ENCODE measurements at regions of chr2 and their contacts with region 1.

Region 1: DNA sequence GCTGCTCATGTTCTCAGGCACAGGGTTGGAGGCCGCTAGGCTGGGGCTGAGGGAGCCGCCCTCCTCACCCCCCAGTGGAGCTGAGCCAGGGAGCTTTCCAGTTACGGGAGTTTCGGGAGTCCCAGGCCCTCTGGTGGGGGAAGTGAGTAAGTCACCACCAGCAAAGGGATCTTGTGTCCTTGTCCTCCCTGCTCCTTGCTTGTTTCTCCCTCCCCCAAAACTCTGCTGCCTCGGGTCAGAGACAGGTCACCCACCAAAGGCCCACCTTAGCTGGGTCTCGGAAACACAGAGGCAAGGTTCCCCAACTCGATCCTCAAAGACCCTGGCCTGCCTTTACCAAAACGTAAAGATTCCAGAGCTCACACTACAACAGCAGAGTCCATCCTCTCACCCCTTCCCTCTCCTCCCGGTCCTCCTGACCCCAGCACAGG is 60.5 kb upstream of the POMC start:
- DNase-seq: peak; percentile 85
- H3K4me3 ChIP-seq: no peak overlapping the region
- H3K4me3 Mint-ChIP-seq: no peak overlapping the region
- H3K27ac Mint-ChIP-seq: no peak overlapping the region
- H3K4me1 ChIP-seq: no peaks in the 10 kb centered on the region
- H3K4me1 Mint-ChIP-seq: peaks cover 7% of the 10 kb centered on the region
- H3K27me3 ChIP-seq: no peaks in the 10 kb centered on the region
- H3K27me3 Mint-ChIP-seq: no peaks in the 10 kb centered on the region
- CTCF ChIP-seq: peak; percentile 64 to 87

Region 2: DNA sequence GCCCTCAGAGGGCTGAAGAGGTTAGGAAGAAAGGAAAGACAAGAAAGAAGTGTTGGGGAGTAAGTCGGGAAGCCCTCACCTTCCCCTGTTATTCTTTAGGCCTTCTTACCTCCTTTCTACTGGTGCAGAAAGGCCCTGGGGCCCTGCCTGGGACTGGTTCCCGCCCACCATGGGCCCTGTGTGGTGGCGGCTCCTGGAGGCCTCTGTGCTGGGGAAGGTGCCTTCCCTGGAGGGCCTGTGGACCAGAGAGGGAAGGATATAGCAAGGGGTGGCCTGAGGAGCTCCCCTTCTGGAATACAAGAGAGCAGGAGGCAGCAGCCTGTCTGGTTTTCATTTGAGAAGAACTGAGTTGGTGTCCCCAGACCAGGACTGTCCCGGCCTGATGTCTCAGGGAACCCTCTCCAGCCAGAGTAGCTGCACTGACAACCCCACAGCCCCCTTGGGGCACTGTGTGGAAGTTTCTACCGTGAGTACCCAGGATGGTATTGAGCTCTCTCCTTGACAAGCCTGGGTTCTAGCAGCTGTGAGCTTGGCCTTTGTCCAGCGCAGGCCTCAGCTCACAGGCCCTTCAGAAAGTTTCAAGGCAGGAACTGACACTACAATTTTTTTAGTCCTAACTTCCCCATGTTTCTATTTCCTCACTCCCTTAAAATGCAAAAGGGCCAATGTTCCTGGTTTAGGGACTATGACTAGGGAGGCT is 139.9 kb before region 1 on chr2:
- CTCF ChIA-PET with region 1: no interaction called
- POLR2A ChIA-PET with region 1: no interaction called
- intact Hi-C with region 1: no loop called
- DNase-seq: no peak
- H3K4me3 ChIP-seq: no peak overlapping the region
- H3K4me3 Mint-ChIP-seq: no peak overlapping the region
- H3K27ac Mint-ChIP-seq: no peak overlapping the region
- H3K4me1 ChIP-seq: peaks cover 14% of the 10 kb centered on the region
- H3K4me1 Mint-ChIP-seq: peaks cover 8% of the 10 kb centered on the region
- H3K27me3 ChIP-seq: no peaks in the 10 kb centered on the region
- H3K27me3 Mint-ChIP-seq: no peaks in the 10 kb centered on the region
- CTCF ChIP-seq: no peak

Region 3: DNA sequence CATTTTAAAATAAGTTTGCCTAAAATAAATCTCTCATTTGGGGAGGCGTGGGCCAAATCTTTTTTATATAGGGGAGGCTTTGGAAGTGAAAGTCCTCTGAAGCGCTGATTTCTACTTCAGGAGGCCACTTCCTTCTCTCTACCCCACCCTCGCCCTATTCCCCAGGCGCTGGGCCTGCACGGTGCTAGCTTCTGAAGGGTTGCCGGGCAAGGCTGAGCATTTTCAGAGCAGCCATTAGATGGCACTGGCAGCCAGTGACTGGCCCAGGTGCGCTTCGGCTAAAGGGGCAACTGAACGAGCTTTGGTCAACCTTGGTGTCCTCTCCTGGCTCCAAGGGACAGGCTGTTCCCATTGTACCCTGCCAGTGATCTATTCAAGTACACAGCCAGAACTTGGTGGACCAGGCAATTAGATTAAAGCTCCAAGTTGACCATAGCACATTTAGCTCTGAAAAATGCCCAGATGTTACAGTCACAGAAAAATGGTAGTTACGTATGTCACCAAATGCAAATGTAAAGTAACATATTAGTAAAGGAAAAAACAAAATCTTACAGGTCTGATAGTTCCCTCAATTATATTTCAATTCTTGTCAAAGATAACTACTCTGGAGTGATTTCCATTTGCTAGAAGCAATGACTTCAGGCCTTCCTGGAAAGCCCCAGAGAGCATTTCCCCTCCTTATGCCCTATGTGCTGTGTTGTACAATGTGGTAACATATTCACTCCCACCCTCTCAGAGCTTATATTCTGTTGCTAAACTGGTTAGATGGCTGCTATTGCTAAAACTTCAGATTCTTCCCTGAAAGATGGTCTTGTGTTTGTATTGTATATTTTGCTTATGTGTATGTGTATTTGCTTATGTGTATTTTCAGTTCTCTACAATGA is 62.6 kb before region 1 on chr2:
- CTCF ChIA-PET with region 1: interaction called, 23 read pairs
- POLR2A ChIA-PET with region 1: no interaction called
- intact Hi-C with region 1: no loop called
- DNase-seq: peak; percentile 50 to 63
- H3K4me3 ChIP-seq: no peak overlapping the region
- H3K4me3 Mint-ChIP-seq: no peak overlapping the region
- H3K27ac Mint-ChIP-seq: no peak overlapping the region
- H3K4me1 ChIP-seq: peaks cover 6% of the 10 kb centered on the region; the same call in 1 of the 2 replicates
- H3K4me1 Mint-ChIP-seq: no peaks in the 10 kb centered on the region
- H3K27me3 ChIP-seq: no peaks in the 10 kb centered on the region
- H3K27me3 Mint-ChIP-seq: peaks cover 4% of the 10 kb centered on the region
- CTCF ChIP-seq: peak; percentile 47 to 52

Region 4: DNA sequence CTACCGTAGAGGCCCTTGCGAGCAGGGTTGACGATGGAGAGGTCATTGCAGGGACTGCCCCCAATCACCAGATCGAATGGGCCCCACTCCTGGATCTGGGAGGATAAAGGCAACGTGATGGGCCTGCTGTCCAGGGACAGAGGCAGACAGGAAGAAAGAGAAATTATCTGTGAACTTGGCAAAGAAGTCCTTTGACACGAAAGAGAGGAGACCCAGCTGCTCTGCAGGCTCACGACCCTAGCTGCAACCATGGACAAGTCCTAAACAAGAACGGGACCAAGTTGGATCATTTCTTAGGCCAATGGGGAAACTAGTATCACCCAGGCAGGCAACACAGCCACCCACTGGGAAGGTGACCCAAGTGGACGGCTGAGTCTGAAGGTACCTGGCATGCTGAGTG is 11.8 kb after region 1 on chr2:
- CTCF ChIA-PET with region 1: no interaction called
- POLR2A ChIA-PET with region 1: no interaction called
- intact Hi-C with region 1: no loop called
- DNase-seq: no peak
- H3K4me3 ChIP-seq: no peak overlapping the region
- H3K4me3 Mint-ChIP-seq: no peak overlapping the region
- H3K27ac Mint-ChIP-seq: no peak overlapping the region
- H3K4me1 ChIP-seq: no peaks in the 10 kb centered on the region
- H3K4me1 Mint-ChIP-seq: no peaks in the 10 kb centered on the region
- H3K27me3 ChIP-seq: no peaks in the 10 kb centered on the region
- H3K27me3 Mint-ChIP-seq: no peaks in the 10 kb centered on the region
- CTCF ChIP-seq: no peak

Region 5: DNA sequence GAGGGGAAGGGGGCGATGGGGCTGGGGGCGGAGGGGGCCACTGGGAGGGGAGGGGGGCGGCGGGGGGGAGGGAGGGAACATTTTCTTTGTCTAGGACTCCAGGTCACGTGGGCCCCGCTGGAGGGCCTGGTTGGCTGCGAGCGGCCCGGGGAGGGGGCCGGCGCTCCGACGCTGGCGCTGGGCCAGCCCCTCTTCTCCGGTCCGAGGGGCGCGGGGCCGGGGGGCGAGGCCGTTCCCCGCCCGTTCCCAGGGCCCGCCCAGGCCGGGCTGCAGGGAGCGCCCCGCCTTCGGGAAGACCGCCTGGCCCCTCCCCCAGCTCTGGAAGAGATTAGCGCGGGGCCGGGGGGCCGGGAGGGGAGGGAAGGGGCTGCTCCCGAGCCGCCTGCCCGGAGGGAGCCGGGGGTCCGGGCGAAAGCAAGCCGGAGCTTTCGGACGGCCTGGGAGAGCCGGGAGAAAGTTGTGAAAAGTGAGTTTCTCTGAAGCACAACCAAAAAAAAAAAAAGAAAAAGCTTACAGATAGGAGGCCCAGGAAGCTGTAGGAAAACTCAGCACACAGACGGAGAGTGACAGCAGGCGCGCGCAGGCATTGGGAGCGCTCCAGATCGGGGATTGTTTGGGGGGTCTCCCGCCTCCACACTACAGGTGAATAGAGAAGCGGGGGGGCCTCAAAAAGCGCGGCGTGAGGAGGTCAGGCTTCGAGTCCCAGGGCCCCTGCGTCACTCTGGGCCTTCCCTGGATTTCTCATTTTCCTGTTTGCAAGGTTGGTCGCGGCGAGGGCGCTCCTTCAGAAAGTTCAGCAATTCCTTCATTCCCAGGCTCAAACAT is 23.6 kb after region 1 on chr2:
- CTCF ChIA-PET with region 1: interaction called, 12 read pairs
- POLR2A ChIA-PET with region 1: no interaction called
- intact Hi-C with region 1: no loop called
- DNase-seq: peak; percentile 90 to 93
- H3K4me3 ChIP-seq: peak overlapping the region; percentile 89
- H3K4me3 Mint-ChIP-seq: peak overlapping the region; percentile 83
- H3K27ac Mint-ChIP-seq: peak overlapping the region; percentile 81
- H3K4me1 ChIP-seq: peaks cover 31% of the 10 kb centered on the region
- H3K4me1 Mint-ChIP-seq: peaks cover 27% of the 10 kb centered on the region
- H3K27me3 ChIP-seq: no peaks in the 10 kb centered on the region; the same call in 1 of the 2 replicates
- H3K27me3 Mint-ChIP-seq: peaks cover 13% of the 10 kb centered on the region
- CTCF ChIP-seq: no peak

Region 6: GRCh38 chr2:25431604-25432003 is 202.7 kb after region 1 on chr2:
- CTCF ChIA-PET with region 1: no interaction called
- POLR2A ChIA-PET with region 1: no interaction called
- intact Hi-C with region 1: no loop called
- DNase-seq: no peak
- H3K4me3 ChIP-seq: no peak overlapping the region
- H3K4me3 Mint-ChIP-seq: no peak overlapping the region
- H3K27ac Mint-ChIP-seq: no peak overlapping the region
- H3K4me1 ChIP-seq: no peaks in the 10 kb centered on the region
- H3K4me1 Mint-ChIP-seq: no peaks in the 10 kb centered on the region
- H3K27me3 ChIP-seq: no peaks in the 10 kb centered on the region
- H3K27me3 Mint-ChIP-seq: no peaks in the 10 kb centered on the region
- CTCF ChIP-seq: no peak

Region 7: DNA sequence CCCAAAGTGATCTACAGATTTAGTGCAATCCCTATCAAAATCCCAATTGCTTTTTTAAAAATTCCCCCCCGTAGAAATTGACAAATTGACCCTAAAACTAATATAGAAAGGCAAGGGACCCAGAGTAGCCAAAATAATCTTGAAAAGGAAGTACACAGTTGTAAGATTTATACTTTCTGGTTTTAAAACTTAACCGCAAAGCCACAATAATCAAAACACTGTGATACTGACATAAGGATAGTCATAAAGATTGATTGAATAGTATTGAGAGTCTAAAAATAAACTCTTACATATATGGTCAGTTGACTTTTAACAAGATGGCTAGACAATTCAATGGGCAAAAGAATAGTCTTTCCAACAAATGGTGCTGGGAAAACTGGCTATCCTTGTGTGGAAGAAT is 885.3 kb after region 1 on chr2:
- CTCF ChIA-PET with region 1: no interaction called
- POLR2A ChIA-PET with region 1: no interaction called
- intact Hi-C with region 1: no loop called
- DNase-seq: no peak
- H3K4me3 ChIP-seq: no peak overlapping the region
- H3K4me3 Mint-ChIP-seq: no peak overlapping the region
- H3K27ac Mint-ChIP-seq: no peak overlapping the region
- H3K4me1 ChIP-seq: no peaks in the 10 kb centered on the region
- H3K4me1 Mint-ChIP-seq: no peaks in the 10 kb centered on the region
- H3K27me3 ChIP-seq: no peaks in the 10 kb centered on the region
- H3K27me3 Mint-ChIP-seq: no peaks in the 10 kb centered on the region
- CTCF ChIP-seq: no peak